Panc1 (cell line): ENCODE measurements at regions of chr10 and their contacts with region 1.

Region 1: DNA sequence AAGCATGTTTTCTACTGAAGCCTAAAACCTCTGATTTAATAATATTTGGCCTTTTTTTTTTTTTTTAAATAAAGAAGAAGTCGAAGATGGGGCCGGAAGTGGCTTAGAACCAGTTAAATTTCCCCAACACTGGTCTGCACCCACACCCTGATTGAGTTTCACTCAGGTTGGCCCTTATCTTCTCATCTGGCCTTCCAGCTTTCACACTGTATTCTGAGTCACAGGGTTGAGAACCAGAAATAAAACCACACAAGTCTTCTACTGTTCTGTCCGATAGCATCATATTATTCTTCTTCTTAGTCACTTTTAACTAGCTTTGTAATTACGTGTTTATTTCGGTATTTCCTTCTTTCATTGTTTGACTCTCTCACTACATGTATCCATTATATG is 9.9 kb downstream of the ZNF365 start:
- DNase-seq: peak; percentile 92
- ATAC-seq: peak; percentile 86
- H3K4me3 ChIP-seq: peak overlapping the region; percentile 28 to 40
- H3K27ac ChIP-seq: peak overlapping the region; percentile 100
- H3K4me1 ChIP-seq: peaks cover 94% of the 10 kb centered on the region
- H3K27me3 ChIP-seq: no peaks in the 10 kb centered on the region
- CTCF ChIP-seq: no peak

Region 2: DNA sequence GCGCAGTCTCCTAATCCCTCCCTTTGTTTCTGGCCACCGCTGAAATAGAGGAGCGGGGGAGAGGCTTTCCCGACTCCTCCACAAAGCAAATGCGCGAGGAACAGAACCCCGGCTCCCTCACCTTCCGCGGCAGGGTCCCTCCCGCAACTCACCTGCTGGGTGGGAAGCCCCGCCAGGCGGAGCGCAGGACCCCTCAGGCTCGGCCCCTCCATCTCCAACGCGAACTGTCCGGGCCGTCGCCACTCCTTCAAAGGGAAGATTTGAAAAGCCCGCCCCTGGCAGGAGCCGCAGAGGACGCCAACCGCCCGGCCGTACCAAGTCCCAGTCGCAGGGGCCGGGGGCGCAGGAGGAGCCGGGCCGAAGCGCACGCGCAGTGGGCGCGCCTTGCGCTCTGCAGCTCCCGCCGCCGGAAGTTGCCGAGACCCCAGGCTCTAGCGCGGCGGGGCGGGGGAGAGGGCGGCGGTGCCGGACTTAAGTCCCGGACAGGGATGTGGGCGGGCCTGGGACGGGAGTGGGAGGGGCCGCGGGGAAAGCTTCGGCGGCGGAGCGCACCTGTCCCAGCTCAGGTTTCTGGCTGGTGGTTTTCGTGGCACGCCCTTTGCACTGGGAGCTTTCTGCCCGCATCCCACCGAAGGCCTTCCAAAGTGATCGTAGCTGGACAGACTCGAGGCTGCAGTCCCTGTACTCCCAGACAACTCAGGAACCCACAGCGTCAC is 115.5 kb before region 1 on chr10 and contains the start of gene RTKN2:
- CTCF ChIA-PET with region 1: interaction called, 7 read pairs
- POLR2A ChIA-PET with region 1: interaction called, 5 read pairs
- in situ Hi-C with region 1: loop called (anchors 25 kb)
- intact Hi-C with region 1: loop called (anchors 2 kb)
- DNase-seq: no peak
- ATAC-seq: peak; percentile 93
- H3K4me3 ChIP-seq: peak within 1 kb of the TSS; percentile 77 to 98
- H3K27ac ChIP-seq: peak within 1 kb of the TSS; percentile 92
- H3K4me1 ChIP-seq: peaks cover 47% of the 10 kb centered on the region
- H3K27me3 ChIP-seq: no peaks in the 10 kb centered on the region
- CTCF ChIP-seq: no peak
- total RNA-seq, gene RTKN2: 21.3 TPM